MCF 10A (cell line): ENCODE measurements at regions of chr17 and their contacts with region 1.

Region 1: GRCh38 chr17:57902800-57903759 is 52.1 kb downstream of the CUEDC1 start:
- DNase-seq: peak; percentile 95
- H3K4me3 Mint-ChIP-seq: peak overlapping the region; percentile 22
- H3K27ac Mint-ChIP-seq: peak overlapping the region; percentile 23
- H3K4me1 Mint-ChIP-seq: peaks cover 49% of the 10 kb centered on the region
- H3K27me3 Mint-ChIP-seq: no peaks in the 10 kb centered on the region
- CTCF ChIP-seq: no peak

Region 2: GRCh38 chr17:57649731-57650484 is 253.2 kb before region 1 on chr17:
- CTCF ChIA-PET with region 1: no interaction called
- POLR2A ChIA-PET with region 1: no interaction called
- intact Hi-C with region 1: no loop called
- DNase-seq: peak; percentile 25
- H3K4me3 Mint-ChIP-seq: no peak overlapping the region
- H3K27ac Mint-ChIP-seq: no peak overlapping the region
- H3K4me1 Mint-ChIP-seq: no peaks in the 10 kb centered on the region
- H3K27me3 Mint-ChIP-seq: no peaks in the 10 kb centered on the region
- CTCF ChIP-seq: no peak

Region 3: DNA sequence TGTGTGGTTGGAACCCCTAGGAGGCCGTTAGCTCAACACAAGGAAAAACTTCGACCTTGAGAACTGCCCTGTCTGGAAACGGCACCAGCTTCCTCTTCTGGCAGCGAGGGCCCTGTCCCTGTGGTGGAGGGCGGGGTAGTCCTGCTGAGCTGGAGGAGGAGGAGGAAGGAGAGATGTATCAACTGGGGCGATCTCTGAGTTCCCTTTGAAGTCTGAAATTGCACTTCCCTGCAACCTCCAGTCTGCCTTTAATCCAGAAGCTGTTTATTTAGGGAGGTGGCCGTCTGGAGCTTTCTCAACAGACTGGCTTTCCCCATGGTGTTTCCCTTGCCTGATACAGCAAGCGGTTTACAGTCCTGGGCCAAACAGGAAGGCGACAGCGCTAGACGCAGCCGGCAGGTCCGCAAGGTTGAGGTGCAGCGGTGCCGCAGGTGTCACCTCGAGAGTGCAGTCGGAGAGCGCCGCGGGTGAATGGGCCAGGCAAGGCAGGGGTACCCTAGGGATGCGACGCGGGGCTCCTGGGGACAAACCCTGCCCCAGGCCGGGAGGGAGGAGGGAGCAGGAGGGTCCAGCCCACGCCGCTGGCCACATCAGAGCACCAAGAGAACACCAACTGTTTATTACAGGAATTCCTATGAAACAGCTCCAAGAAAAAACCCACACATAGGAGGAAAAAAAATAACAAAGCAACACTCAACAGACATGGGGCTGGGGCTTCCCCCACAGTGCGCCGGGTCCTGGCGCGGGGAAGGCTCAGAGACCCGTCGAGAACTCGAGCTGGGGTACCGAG is 41.9 kb before region 1 on chr17:
- CTCF ChIA-PET with region 1: interaction called, 12 read pairs
- POLR2A ChIA-PET with region 1: interaction called, 5 read pairs
- intact Hi-C with region 1: loop called (anchors 5 kb)
- DNase-seq: no peak
- H3K4me3 Mint-ChIP-seq: no peak overlapping the region
- H3K27ac Mint-ChIP-seq: no peak overlapping the region
- H3K4me1 Mint-ChIP-seq: peaks cover 14% of the 10 kb centered on the region
- H3K27me3 Mint-ChIP-seq: no peaks in the 10 kb centered on the region
- CTCF ChIP-seq: no peak

Region 4: DNA sequence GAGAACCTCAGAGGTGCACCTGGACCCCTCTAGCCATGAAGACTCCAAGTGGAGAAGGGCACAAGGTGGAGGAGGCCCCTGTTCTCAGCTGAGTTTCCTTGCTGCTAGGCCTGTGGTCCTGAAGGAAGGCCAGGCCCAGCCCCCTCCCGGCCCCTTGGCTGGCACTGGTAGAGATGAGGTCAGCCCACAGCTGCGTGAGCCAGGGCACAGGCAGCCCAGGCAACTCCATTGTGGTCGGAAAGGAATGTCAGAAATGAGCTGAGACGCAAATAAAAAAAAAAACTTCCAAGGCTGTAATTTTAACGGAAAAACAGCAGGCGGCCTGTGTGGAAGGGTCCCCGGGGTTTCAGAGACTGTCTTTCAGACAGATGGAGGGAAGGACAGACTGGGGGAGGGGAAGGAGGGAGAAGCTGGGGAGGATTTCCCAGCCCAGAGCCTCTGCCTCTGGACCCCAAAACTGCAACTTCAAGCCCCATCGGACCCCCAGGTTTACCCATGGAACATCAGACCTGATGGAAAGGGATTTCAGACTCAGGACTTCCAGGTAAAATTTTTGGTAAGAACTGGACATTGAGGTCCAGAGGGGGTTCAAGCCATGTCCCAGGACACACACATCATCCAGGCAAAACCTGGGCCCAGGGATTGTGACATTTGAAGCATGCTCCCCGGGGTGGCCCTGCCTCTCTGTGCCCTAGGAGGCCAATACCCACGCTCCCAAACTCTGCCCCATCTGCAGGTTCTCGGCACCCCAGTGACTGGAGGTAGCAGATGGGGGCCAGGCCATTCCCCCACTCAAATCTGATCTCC is 27.6 kb before region 1 on chr17:
- CTCF ChIA-PET with region 1: interaction called, 21 read pairs
- POLR2A ChIA-PET with region 1: interaction called, 21 read pairs
- intact Hi-C with region 1: no loop called
- DNase-seq: peak; percentile 94
- H3K4me3 Mint-ChIP-seq: peak overlapping the region; percentile 41
- H3K27ac Mint-ChIP-seq: peak overlapping the region; percentile 51
- H3K4me1 Mint-ChIP-seq: peaks cover 45% of the 10 kb centered on the region
- H3K27me3 Mint-ChIP-seq: no peaks in the 10 kb centered on the region
- CTCF ChIP-seq: peak; percentile 52

Region 5: DNA sequence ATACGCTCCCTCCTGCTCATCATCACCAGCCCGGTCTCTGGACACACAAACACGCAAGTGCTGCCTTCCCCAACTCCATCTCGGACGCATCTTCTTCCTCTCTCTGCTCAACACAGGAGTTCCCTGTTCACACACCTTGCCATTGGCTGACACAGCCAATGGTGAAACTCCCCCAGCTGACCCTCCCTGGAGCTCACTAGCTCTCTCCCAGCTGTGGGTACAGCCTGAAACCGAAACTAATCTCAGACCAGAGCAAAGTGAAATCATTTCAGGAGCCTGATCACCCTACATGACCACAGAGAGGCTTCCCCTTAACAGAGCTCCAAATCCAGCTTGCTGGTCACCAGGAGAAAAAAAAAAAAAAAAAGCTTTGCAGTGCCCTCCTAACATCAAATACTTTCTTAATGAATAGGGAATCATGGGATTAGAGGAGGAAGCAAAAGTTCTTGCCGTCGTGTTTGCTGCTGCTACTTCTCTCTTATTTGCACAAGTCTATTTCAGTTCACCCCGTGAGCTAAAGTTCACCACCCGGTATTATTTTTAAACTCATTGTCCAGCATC is 43.8 kb after region 1 on chr17:
- CTCF ChIA-PET with region 1: interaction called, 23 read pairs
- POLR2A ChIA-PET with region 1: interaction called, 102 read pairs
- intact Hi-C with region 1: loop called (anchors 2 kb)
- DNase-seq: peak; percentile 56
- H3K4me3 Mint-ChIP-seq: peak overlapping the region; percentile 68
- H3K27ac Mint-ChIP-seq: peak overlapping the region; percentile 49
- H3K4me1 Mint-ChIP-seq: peaks cover 46% of the 10 kb centered on the region
- H3K27me3 Mint-ChIP-seq: no peaks in the 10 kb centered on the region
- CTCF ChIP-seq: no peak

Region 6: GRCh38 chr17:58006924-58007780 is 104.1 kb after region 1 on chr17 and contains the start of gene SRSF1:
- CTCF ChIA-PET with region 1: interaction called, 6 read pairs
- POLR2A ChIA-PET with region 1: interaction called, 16 read pairs
- intact Hi-C with region 1: no loop called
- DNase-seq: peak; percentile 97
- H3K4me3 Mint-ChIP-seq: peak within 1 kb of the TSS; percentile 99
- H3K27ac Mint-ChIP-seq: peak within 1 kb of the TSS; percentile 99
- H3K4me1 Mint-ChIP-seq: peaks cover 27% of the 10 kb centered on the region
- H3K27me3 Mint-ChIP-seq: no peaks in the 10 kb centered on the region
- CTCF ChIP-seq: no peak
- total RNA-seq, gene SRSF1: 381 and 493 TPM in 2 replicates